Activated CD4-positive, alpha-beta memory T cell treated with anti-CD3 and anti-CD28 coated beads for 36 hours (primary cell): ENCODE measurements at regions of chr5 and their contacts with region 1.

Region 1: DNA sequence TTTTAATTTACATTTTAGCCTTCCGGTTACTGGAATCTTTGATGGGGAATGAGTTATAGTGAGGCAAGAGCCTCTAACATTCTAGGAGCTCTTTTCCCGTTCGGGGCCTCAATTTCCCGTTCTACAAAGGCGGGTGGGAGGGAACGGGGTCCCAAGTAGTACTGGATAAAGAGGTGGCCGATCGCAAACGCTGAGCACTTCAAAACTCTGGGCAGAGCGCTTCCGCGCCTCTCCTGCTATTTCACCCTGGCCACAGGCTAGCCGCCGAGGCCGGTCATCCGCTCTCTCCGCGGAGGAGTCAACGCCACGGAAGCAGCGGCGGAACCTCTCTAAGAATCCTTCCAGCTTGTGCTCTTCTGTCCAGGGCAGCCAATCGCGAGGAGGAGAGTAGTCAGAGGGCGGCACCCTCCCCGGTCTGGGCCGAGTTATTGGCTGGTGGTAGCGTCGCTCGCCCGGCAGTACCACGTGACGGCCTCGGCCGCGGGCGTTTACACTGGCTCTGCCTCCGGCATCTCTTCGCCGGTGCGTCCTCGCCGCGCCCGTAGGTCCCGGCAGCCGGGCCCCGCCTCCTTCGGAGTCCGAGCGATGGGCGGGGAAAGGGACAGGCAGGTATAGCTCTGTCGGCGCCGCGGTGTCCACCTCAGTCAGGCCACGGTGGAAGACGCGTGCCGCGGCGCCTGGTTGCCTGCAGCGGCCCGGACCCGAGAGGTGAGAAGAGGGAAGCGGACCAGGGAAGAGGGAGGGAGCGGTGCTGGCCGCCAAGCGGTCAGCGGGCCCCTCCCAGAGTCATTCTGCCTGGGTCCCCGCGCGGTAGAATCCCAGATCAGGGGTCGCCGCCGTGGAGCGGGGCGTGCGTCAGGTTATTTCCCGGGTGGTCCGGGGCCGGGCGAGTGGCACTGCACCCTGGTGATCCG is at the start of gene SLC26A2:
- DNase-seq: peak; percentile 97
- H3K4me3 Mint-ChIP-seq: peak within 1 kb of the TSS; percentile 91
- H3K27ac Mint-ChIP-seq: peak within 1 kb of the TSS; percentile 97
- H3K4me1 Mint-ChIP-seq: peaks cover 25% of the 10 kb centered on the region
- H3K27me3 Mint-ChIP-seq: no peaks in the 10 kb centered on the region
- total RNA-seq, gene SLC26A2: 5.9 to 6.2 TPM

Region 2: DNA sequence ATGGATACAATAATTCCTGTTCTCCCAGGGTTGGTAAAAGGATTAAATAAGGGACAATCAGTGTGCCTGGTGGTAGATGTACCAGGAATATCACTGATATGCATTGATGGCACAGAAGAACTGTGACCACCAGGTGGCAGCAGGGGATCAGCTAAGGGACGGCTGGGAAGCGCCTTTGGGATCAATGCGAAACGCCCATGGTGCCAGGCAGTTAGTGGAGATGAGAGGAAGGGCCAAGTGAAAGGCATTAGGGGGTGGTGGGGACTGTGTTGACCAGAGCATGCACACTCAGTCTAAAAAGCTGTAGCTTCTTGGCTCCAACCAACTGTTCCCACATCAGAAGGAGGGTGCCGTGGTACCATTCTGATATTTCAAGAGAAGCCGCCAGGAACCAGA is 323.7 kb before region 1 on chr5:
- CTCF ChIA-PET with region 1: interaction called, 9 read pairs
- POLR2A ChIA-PET with region 1: no interaction called
- intact Hi-C with region 1: loop called (anchors 5 kb)
- DNase-seq: peak; percentile 74
- H3K4me3 Mint-ChIP-seq: no peak overlapping the region
- H3K27ac Mint-ChIP-seq: no peak overlapping the region
- H3K4me1 Mint-ChIP-seq: peaks cover 16% of the 10 kb centered on the region
- H3K27me3 Mint-ChIP-seq: no peaks in the 10 kb centered on the region

Region 3: DNA sequence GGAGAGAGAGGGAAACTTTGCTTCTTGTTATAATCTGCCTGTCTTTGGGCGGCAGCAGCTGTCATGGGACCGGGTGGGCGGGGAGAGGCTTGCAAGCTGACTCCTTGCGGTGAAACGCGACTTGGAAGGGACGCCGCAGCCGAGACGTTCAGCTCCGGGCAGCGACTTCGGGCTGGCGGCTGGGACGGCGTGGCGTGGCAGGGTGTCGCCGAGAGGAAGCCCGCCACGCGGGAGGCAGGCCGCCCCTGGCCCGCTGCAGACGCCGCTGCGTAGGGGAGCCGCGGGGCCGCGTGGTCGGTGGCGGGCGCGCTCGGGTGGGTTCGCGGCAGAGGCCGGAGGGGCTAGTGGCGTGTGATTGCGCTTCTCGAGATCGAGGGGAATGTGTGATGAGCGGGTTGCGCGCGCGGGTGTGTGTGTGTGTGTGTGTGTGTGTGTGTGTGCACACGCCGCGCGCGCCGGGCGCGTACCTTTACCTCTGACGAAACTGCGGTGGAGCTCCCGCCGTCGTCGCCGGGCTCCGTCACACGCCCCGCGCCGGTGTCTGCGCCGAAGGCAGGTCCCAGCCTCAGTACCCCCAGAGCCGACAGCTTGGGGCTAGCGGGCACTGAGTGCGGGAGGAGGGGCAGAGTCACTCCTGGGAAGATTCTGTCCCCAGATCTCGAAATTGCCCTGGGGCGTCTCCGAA is 228.7 kb before region 1 on chr5:
- CTCF ChIA-PET with region 1: interaction called, 4 read pairs
- POLR2A ChIA-PET with region 1: no interaction called
- intact Hi-C with region 1: loop called (anchors 1 kb)
- DNase-seq: peak; percentile 89
- H3K4me3 Mint-ChIP-seq: peak overlapping the region; percentile 77
- H3K27ac Mint-ChIP-seq: no peak overlapping the region
- H3K4me1 Mint-ChIP-seq: peaks cover 3% of the 10 kb centered on the region
- H3K27me3 Mint-ChIP-seq: no peaks in the 10 kb centered on the region

Region 4: DNA sequence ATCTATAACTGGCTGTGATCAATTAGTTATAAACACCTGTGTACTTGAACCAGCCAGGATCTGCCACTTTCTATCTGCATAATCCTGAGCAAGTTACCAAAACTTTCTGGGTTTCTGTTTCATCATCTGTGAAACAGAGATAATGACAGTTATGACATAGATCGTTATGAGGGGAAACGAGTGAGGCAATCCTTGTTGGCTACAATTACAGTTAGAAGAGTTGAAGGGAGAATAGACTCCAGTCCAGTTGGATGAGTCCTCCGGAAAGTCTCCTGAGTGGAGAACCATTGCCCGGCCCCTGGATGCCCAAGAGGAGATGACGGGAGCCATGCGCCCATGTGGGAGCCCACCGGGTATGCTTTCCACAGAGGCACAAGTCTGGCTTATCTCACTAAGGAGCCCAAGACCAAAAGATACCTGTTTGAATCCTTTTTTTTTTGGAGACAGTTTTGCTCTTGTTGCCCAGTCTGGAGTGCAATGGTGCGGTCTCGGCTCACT is 20.4 kb before region 1 on chr5:
- CTCF ChIA-PET with region 1: interaction called, 12 read pairs
- POLR2A ChIA-PET with region 1: no interaction called
- intact Hi-C with region 1: loop called (anchors 1 kb)
- DNase-seq: no peak
- H3K4me3 Mint-ChIP-seq: no peak overlapping the region
- H3K27ac Mint-ChIP-seq: no peak overlapping the region
- H3K4me1 Mint-ChIP-seq: peaks cover 9% of the 10 kb centered on the region
- H3K27me3 Mint-ChIP-seq: peaks cover 5% of the 10 kb centered on the region

Region 5: GRCh38 chr5:150286890-150287219 is 326.3 kb after region 1 on chr5:
- CTCF ChIA-PET with region 1: no interaction called
- POLR2A ChIA-PET with region 1: no interaction called
- intact Hi-C with region 1: no loop called
- DNase-seq: no peak
- H3K4me3 Mint-ChIP-seq: no peak overlapping the region
- H3K27ac Mint-ChIP-seq: no peak overlapping the region
- H3K4me1 Mint-ChIP-seq: no peaks in the 10 kb centered on the region
- H3K27me3 Mint-ChIP-seq: no peaks in the 10 kb centered on the region